Calu3 (cell line): ENCODE measurements at regions of chr15 and their contacts with region 1.

Region 1: GRCh38 chr15:62896978-62897647 is 145.4 kb upstream of the TPM1 start:
- DNase-seq: peak; percentile 98
- H3K4me3 Mint-ChIP-seq: peak overlapping the region; percentile 57
- H3K27ac Mint-ChIP-seq: peak overlapping the region; percentile 97
- H3K4me1 Mint-ChIP-seq: peaks cover 74% of the 10 kb centered on the region
- H3K27me3 Mint-ChIP-seq: no peaks in the 10 kb centered on the region
- CTCF ChIP-seq: no peak

Region 2: GRCh38 chr15:62782039-62782791 is 114.9 kb before region 1 on chr15:
- CTCF ChIA-PET with region 1: interaction called, 24 read pairs
- intact Hi-C with region 1: loop called (anchors 1 kb)
- DNase-seq: peak; percentile 83
- H3K4me3 Mint-ChIP-seq: no peak overlapping the region
- H3K27ac Mint-ChIP-seq: peak overlapping the region; percentile 82
- H3K4me1 Mint-ChIP-seq: peaks cover 49% of the 10 kb centered on the region
- H3K27me3 Mint-ChIP-seq: no peaks in the 10 kb centered on the region
- CTCF ChIP-seq: peak; percentile 83

Region 3: GRCh38 chr15:62847900-62848489 is 49.1 kb before region 1 on chr15:
- CTCF ChIA-PET with region 1: interaction called, 16 read pairs
- intact Hi-C with region 1: loop called (anchors 2 kb)
- DNase-seq: peak; percentile 85
- H3K4me3 Mint-ChIP-seq: no peak overlapping the region
- H3K27ac Mint-ChIP-seq: peak overlapping the region; percentile 76
- H3K4me1 Mint-ChIP-seq: peaks cover 85% of the 10 kb centered on the region
- H3K27me3 Mint-ChIP-seq: no peaks in the 10 kb centered on the region
- CTCF ChIP-seq: peak; percentile 69

Region 4: DNA sequence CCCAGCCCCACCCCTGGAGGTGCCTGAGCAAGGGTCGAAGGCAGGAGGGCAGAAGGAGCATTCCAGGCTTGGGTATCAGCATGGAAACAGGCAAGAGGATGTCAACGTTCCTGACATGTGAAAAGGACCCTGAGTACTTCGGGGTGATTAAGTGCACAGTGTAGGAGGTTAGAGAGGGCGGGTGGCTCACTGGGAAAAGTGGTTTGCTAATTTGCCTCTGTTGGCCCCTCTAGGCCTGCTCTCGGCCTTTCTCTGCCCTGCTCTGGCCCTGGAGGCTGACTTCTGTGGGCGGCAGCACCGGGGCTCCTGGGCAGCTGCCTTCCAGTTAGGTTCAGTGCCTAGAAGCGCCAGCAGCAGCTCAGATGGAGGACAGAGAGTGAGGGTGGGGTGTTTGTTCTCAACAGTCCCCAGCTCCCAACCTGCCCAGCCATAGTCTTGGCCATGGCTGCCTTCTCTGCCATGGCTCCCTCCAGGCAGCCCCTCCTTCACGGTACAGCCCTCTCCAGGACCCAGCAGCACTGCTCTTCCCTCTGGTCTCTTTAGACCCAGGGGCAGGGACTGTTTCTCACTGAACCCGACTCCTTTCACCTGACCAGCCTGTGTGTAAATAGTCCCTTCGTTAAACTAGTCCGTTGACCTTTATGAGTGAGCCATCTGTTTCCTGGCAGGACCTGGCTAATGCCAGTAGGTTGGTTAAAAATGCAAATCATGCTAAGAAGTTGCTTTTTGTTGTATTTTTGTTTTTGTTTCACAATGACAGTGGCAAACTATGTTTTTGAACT is 38.4 kb after region 1 on chr15:
- CTCF ChIA-PET with region 1: interaction called, 5 read pairs
- intact Hi-C with region 1: loop called (anchors 5 kb)
- DNase-seq: peak; percentile 18
- H3K4me3 Mint-ChIP-seq: peak overlapping the region; percentile 18
- H3K27ac Mint-ChIP-seq: peak overlapping the region; percentile 75
- H3K4me1 Mint-ChIP-seq: peaks cover 44% of the 10 kb centered on the region
- H3K27me3 Mint-ChIP-seq: no peaks in the 10 kb centered on the region
- CTCF ChIP-seq: no peak

Region 5: GRCh38 chr15:63041974-63042819 is 145.1 kb after region 1 on chr15 and contains the start of gene TPM1:
- CTCF ChIA-PET with region 1: interaction called, 8 read pairs
- intact Hi-C with region 1: loop called (anchors 1 kb)
- DNase-seq: peak; percentile 96
- H3K4me3 Mint-ChIP-seq: peak within 1 kb of the TSS; percentile 98
- H3K27ac Mint-ChIP-seq: peak within 1 kb of the TSS; percentile 77
- H3K4me1 Mint-ChIP-seq: peaks cover 54% of the 10 kb centered on the region
- H3K27me3 Mint-ChIP-seq: no peaks in the 10 kb centered on the region
- CTCF ChIP-seq: no peak
- total RNA-seq, gene TPM1: 691 and 1,158 TPM in 2 replicates